ENCODE measurements at regions of chr1 and their contacts with region 1.

Region 1: GRCh38 chr1:20446796-20447195 is 39.2 kb downstream of the CAMK2N1 start:
- DNase-seq: peak in 7 of 10 donors; percentile 17 to 94 (median 67)

Region 2: DNA sequence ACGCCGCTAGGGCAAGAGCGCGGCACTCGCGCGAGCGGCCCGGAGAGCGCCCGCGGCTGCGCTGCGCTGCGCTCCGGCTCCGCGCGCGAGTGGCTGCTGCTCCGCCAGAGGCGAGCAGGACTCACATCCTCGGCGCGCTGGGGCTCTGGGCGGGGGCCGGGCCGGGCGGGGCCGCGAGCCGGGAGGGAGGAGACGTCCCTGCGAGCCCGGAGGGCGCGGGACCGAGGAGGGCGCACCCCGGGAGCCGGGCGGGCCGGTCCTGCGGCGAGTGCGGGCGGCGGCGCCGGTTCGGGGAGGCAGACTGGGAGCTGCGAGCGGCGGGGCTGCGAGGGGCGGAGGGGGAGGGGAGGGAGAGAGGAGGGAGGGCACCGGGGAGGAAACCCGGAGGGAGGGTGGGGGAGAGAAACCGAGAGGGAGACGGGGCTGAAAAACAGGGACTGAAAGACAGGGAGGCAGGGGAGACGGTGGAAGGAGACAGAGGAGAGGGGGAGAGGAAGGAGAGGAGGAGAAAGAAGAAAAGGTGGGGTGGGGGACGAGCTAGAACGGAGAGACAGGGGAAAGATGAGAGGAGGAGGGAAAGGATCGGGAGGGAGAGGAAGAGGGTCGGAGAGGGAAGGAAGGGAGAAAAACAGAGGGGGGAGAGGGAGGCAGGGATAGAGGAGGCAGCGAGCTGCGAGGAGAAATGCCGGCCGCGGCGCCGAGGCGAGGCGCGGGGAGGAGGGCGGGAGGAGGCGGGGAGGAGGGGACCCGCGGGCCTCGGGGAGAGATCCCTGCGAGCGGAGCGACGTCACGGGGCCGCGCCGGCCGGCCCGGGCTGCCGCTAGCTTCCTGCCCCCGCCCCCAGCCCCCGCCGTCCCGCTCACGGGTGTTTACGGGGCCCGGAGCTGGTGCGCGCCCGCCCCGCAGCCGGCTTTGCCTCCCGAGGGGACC is 39.0 kb after region 1 on chr1 and contains the start of gene CAMK2N1:
- intact Hi-C with region 1: loop called (anchors 5 kb)
- DNase-seq: peak; percentile 77 to 97 (median 86)